Activated CD4-positive, alpha-beta memory T cell treated with anti-CD3 and anti-CD28 coated beads for 36 hours (primary cell): ENCODE measurements at regions of chr1 and their contacts with region 1.

Region 1: GRCh38 chr1:37474046-37474759 is at the start of gene ZC3H12A:
- DNase-seq: peak; percentile 93
- H3K4me3 Mint-ChIP-seq: peak within 1 kb of the TSS; percentile 94
- H3K27ac Mint-ChIP-seq: peak within 1 kb of the TSS; percentile 100
- H3K4me1 Mint-ChIP-seq: peaks cover 37% of the 10 kb centered on the region
- H3K27me3 Mint-ChIP-seq: no peaks in the 10 kb centered on the region
- total RNA-seq, gene ZC3H12A: 39.0 to 40.8 TPM

Region 2: GRCh38 chr1:37342736-37343135 is 131.5 kb before region 1 on chr1:
- CTCF ChIA-PET with region 1: no interaction called
- POLR2A ChIA-PET with region 1: no interaction called
- intact Hi-C with region 1: no loop called
- DNase-seq: no peak
- H3K4me3 Mint-ChIP-seq: no peak overlapping the region
- H3K27ac Mint-ChIP-seq: no peak overlapping the region
- H3K4me1 Mint-ChIP-seq: no peaks in the 10 kb centered on the region
- H3K27me3 Mint-ChIP-seq: peaks cover 3% of the 10 kb centered on the region

Region 3: GRCh38 chr1:37449936-37450335 is 24.3 kb before region 1 on chr1:
- CTCF ChIA-PET with region 1: interaction called, 13 read pairs
- POLR2A ChIA-PET with region 1: interaction called, 3 read pairs
- intact Hi-C with region 1: loop called (anchors 2 kb)
- DNase-seq: peak; percentile 58
- H3K4me3 Mint-ChIP-seq: no peak overlapping the region
- H3K27ac Mint-ChIP-seq: peak overlapping the region; percentile 18
- H3K4me1 Mint-ChIP-seq: peaks cover 8% of the 10 kb centered on the region
- H3K27me3 Mint-ChIP-seq: peaks cover 9% of the 10 kb centered on the region

Region 4: GRCh38 chr1:37458528-37458927 is 15.7 kb before region 1 on chr1:
- CTCF ChIA-PET with region 1: interaction called, 13 read pairs
- POLR2A ChIA-PET with region 1: interaction called, 3 read pairs
- intact Hi-C with region 1: loop called (anchors 2 kb)
- DNase-seq: no peak
- H3K4me3 Mint-ChIP-seq: no peak overlapping the region
- H3K27ac Mint-ChIP-seq: no peak overlapping the region
- H3K4me1 Mint-ChIP-seq: peaks cover 4% of the 10 kb centered on the region
- H3K27me3 Mint-ChIP-seq: no peaks in the 10 kb centered on the region